Activated CD8-positive, alpha-beta T cell treated with anti-CD3 and anti-CD28 coated beads, Interleukin-2, amount 10 ng/mL, durations not matched to agents 7 days and 5 days (primary cell): ENCODE measurements at regions of chr3 and their contacts with region 1.

Region 1: DNA sequence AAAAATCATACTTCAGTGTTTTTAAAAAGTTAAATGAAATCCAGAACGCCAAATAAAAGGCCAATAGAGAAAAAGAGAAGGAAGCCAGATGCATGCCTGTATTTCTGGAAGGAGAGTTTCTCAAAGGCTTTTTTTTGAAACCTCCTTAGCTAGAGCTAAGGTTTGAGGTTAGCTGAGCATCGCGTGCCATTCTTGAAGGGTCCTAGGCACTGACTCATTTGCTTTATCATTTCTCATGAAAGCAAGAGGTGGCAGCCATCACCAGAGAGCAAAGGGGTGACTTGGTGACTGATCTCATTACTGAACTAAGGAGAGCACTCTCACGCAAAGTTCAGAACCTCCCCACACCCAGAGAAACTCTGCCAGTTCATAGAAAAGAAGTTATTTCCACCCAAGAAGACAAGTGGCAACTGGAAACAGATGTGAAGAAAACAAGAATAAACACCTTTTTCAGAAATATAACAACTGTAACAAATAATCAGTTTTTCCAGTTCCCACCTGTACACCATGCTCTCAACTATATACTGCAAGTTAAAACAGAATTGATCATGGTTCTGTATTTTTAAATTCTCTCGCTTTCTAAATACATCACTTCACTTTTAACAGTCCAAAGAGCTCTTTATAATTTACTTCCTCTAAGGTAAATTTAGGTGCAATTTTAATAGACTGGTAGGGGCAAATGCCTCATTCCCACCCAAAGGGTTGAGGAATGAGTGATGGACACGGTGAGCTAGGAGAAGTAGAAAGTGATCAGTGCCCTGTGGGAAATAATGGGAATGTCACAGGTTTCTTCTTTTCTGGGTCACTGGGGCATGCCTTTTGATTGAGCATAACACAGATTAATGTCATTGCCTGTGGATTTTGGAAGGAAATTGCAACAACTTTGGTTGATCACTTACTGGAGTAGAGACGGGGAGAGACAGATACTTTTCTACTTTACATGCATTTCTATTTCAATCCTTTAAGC is 24.7 kb downstream of the GPR15 start:
- DNase-seq: peak; percentile 92
- ATAC-seq: peak; percentile 89
- H3K4me3 Mint-ChIP-seq: peak overlapping the region; percentile 89
- H3K27ac Mint-ChIP-seq: peak overlapping the region; percentile 97
- H3K4me1 Mint-ChIP-seq: peaks cover 88% of the 10 kb centered on the region
- H3K27me3 Mint-ChIP-seq: no peaks in the 10 kb centered on the region

Region 2: DNA sequence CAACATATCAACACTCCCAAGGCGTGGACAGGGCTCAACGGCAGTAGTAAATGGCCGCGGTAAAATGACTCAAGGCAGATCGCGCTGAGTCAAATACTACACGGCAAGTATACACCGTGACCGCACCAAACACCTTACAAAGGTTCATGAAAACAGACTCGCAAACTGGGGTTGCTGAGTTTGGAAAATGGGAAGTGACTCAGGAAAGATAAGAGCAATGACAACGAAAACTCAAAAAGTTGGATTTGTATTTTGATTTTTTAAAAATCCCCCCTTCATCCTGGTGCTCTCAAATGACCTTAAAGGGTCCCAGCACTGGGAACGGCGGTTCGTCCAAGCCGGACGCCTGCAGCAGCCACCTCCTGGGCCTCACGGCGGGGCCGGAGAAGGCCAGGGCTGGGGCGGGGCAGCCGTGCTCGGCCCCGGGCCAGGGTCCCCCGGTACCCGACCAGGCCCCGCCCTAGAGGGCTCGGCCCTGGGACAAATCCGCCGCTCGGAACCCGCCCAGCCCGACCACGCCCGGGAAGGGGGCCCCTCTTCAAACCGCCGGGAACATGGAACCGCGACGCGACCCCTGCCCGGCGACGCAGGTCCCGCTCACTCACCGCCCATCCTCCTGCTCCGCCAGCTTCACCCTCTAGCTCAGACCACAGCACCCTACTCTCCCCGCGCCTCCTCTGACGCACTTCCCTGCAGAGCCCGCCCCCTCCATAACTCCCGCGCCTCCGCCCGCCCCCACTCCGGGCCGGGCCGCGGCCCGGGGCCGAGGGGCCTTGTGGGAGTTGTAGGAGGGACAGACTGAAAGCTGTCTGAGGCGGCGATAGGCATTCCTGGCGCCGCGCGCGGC is 34.0 kb before region 1 on chr3 and contains the start of gene CLDND1:
- CTCF ChIA-PET with region 1: interaction called, 36 read pairs
- POLR2A ChIA-PET with region 1: interaction called, 113 read pairs
- DNase-seq: peak; percentile 97
- ATAC-seq: peak; percentile 95
- H3K4me3 Mint-ChIP-seq: peak within 1 kb of the TSS; percentile 93
- H3K27ac Mint-ChIP-seq: peak within 1 kb of the TSS; percentile 97
- H3K4me1 Mint-ChIP-seq: peaks cover 60% of the 10 kb centered on the region
- H3K27me3 Mint-ChIP-seq: no peaks in the 10 kb centered on the region
- total RNA-seq, gene CLDND1: 410 to 414 TPM

Region 3: GRCh38 chr3:98540346-98540745 is 16.1 kb before region 1 on chr3:
- CTCF ChIA-PET with region 1: interaction called, 22 read pairs
- POLR2A ChIA-PET with region 1: interaction called, 217 read pairs
- DNase-seq: peak; percentile 54
- ATAC-seq: peak; percentile 61
- H3K4me3 Mint-ChIP-seq: peak overlapping the region; percentile 24
- H3K27ac Mint-ChIP-seq: peak overlapping the region; percentile 79
- H3K4me1 Mint-ChIP-seq: peaks cover 67% of the 10 kb centered on the region
- H3K27me3 Mint-ChIP-seq: no peaks in the 10 kb centered on the region

Region 4: GRCh38 chr3:98545940-98546339 is 10.5 kb before region 1 on chr3:
- CTCF ChIA-PET with region 1: interaction called, 21 read pairs
- POLR2A ChIA-PET with region 1: interaction called, 217 read pairs
- DNase-seq: no peak
- ATAC-seq: peak; percentile 78
- H3K4me3 Mint-ChIP-seq: peak overlapping the region; percentile 66
- H3K27ac Mint-ChIP-seq: peak overlapping the region; percentile 88
- H3K4me1 Mint-ChIP-seq: peaks cover 76% of the 10 kb centered on the region
- H3K27me3 Mint-ChIP-seq: no peaks in the 10 kb centered on the region

Region 5: DNA sequence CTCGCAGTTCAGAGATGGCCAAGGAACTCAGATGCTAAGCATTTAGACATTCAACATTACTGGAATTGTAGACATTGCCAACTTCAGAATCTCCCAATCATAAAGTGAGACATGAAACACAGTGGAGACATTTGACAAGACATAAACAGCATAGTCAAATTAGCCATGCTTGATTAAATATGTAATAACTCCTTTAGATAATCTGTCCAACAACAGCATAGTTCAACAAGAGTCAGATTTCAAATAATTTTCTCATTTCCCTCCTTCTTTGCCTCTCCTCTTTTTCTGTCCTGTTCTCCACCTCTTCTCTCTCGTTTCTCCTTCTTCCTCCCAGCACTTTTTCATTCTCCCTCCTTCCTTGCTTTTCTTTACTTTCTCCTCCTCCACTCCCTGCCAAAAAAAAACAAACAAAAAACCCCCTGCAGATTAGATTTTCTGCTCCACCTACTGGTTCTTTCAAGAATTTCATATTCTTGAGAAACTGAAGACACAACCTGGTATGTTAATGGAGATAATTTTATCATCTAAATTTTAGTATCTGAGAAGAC is 16.8 kb after region 1 on chr3:
- CTCF ChIA-PET with region 1: interaction called, 26 read pairs
- POLR2A ChIA-PET with region 1: interaction called, 63 read pairs
- DNase-seq: no peak
- ATAC-seq: peak; percentile 59
- H3K4me3 Mint-ChIP-seq: peak overlapping the region; percentile 32
- H3K27ac Mint-ChIP-seq: peak overlapping the region; percentile 81
- H3K4me1 Mint-ChIP-seq: peaks cover 68% of the 10 kb centered on the region
- H3K27me3 Mint-ChIP-seq: no peaks in the 10 kb centered on the region

Region 6: GRCh38 chr3:98655666-98656065 is 99.2 kb after region 1 on chr3:
- CTCF ChIA-PET with region 1: no interaction called
- POLR2A ChIA-PET with region 1: no interaction called
- DNase-seq: no peak
- ATAC-seq: no peak
- H3K4me3 Mint-ChIP-seq: no peak overlapping the region
- H3K27ac Mint-ChIP-seq: no peak overlapping the region
- H3K4me1 Mint-ChIP-seq: peaks cover 3% of the 10 kb centered on the region
- H3K27me3 Mint-ChIP-seq: peaks cover 26% of the 10 kb centered on the region